GM12878 (cell line): ENCODE measurements at regions of chr2 and their contacts with region 1.

Region 1: DNA sequence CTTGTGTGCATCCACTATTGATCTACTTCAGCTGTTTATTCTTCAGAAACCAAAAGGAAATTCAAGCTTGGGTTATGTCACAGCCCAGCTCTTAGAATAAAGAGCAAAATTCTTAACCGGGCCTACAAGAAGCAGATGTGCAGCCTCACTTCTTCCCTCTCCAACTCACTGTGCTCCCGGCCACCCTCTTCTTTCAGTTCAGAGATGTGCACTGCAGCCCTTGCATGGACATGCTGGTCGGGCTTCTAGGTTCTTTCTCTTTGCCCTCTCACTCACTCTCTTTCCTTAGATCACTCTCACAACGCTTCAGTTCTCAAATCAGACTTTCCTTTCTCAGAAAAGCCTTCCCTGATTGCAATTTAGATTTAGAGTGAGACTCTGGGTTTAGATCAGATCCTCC is 104.1 kb downstream of the CHN1 start:
- DNase-seq: no peak
- ATAC-seq: peak; percentile 29; the same call in 1 of the 3 replicates
- H3K4me3 ChIP-seq: no peak overlapping the region
- H3K27ac ChIP-seq: no peak overlapping the region
- H3K4me1 ChIP-seq: no peaks in the 10 kb centered on the region
- H3K27me3 ChIP-seq: no peaks in the 10 kb centered on the region
- CTCF ChIP-seq: no peak
- EP300 ChIP-seq: no peak
- POLR2A ChIP-seq: no peak
- RAD21 ChIP-seq: no peak

Region 2: DNA sequence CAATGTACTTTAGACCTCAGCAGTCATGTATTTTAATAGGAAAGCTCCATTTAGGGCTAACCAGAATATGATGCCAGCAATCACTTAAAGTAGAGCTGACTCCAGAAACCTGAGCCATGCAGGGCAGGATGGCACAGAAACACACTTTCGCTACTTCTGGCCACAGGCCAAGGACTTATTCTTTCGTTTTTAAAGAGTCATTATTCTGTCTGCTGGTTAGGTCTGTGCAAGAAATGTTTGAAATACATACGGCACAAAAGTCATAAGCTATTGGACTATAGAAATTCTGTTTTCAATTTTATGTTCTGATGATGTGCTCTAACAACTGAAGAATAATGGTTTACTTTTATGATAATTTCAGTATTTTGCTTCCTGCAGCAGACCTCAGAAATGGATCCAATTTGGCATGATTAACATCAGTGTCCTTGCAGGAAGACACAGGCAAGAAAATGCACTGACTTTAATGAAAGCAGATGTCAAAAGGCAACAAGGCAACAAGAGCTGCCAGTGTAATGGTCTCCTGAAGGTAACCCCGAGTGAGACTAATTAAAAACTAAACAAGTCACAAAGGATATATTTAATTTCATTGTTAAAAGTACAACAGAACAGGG is 22.4 kb before region 1 on chr2:
- CTCF ChIA-PET with region 1: no interaction called
- POLR2A ChIA-PET with region 1: no interaction called
- RAD21 ChIA-PET with region 1: no interaction called
- SMC1A ChIA-PET with region 1: no interaction called
- in situ Hi-C with region 1: no loop called
- intact Hi-C with region 1: no loop called
- DNase-seq: no peak
- ATAC-seq: no peak
- H3K4me3 ChIP-seq: no peak overlapping the region
- H3K27ac ChIP-seq: no peak overlapping the region
- H3K4me1 ChIP-seq: no peaks in the 10 kb centered on the region
- H3K27me3 ChIP-seq: no peaks in the 10 kb centered on the region
- CTCF ChIP-seq: no peak
- EP300 ChIP-seq: no peak
- POLR2A ChIP-seq: no peak
- RAD21 ChIP-seq: no peak

Region 3: GRCh38 chr2:174916270-174916930 is 15.3 kb after region 1 on chr2:
- CTCF ChIA-PET with region 1: no interaction called
- POLR2A ChIA-PET with region 1: no interaction called
- RAD21 ChIA-PET with region 1: no interaction called
- SMC1A ChIA-PET with region 1: no interaction called
- in situ Hi-C with region 1: no loop called
- intact Hi-C with region 1: loop called (anchors 1 kb)
- DNase-seq: no peak
- ATAC-seq: no peak
- H3K4me3 ChIP-seq: no peak overlapping the region
- H3K27ac ChIP-seq: no peak overlapping the region
- H3K4me1 ChIP-seq: no peaks in the 10 kb centered on the region
- H3K27me3 ChIP-seq: no peaks in the 10 kb centered on the region
- CTCF ChIP-seq: no peak
- EP300 ChIP-seq: no peak
- POLR2A ChIP-seq: no peak
- RAD21 ChIP-seq: no peak